SK-N-SH (cell line): ENCODE measurements at regions of chr10 and their contacts with region 1.

Region 1: GRCh38 chr10:100433253-100434240 is 29.3 kb upstream of the WNT8B start:
- DNase-seq: peak; percentile 77
- H3K4me3 ChIP-seq: no peak overlapping the region; a peak in 1 of 4 replicates
- H3K27ac ChIP-seq: no peak overlapping the region
- H3K4me1 ChIP-seq: no peaks in the 10 kb centered on the region
- H3K27me3 ChIP-seq: no peaks in the 10 kb centered on the region
- CTCF ChIP-seq: peak; percentile 100
- EP300 ChIP-seq: no peak
- RAD21 ChIP-seq: peak; percentile 100

Region 2: DNA sequence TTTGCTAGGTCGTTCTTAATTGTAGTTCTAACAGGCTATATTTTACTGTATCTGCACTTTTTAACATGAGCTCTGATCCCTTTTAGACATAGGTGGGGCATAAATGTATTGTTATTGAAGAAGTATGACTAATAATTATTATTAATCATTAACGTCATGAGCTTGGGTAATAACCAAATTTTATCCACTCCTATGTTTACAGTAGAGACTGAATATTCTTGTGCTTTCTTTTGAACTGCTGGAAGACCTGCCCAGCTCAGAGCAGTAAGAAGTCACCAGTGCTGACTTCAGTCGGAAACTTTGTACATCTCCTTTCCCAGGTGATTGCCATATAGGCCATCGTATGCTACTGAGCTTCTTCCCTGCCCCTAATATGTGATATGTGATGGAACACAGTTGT is 122.2 kb before region 1 on chr10:
- CTCF ChIA-PET with region 1: interaction called, 15 read pairs
- POLR2A ChIA-PET with region 1: no interaction called
- DNase-seq: no peak
- H3K4me3 ChIP-seq: no peak overlapping the region
- H3K27ac ChIP-seq: no peak overlapping the region
- H3K4me1 ChIP-seq: no peaks in the 10 kb centered on the region
- H3K27me3 ChIP-seq: peaks cover 38% of the 10 kb centered on the region; the same call in 1 of the 2 replicates
- CTCF ChIP-seq: no peak
- EP300 ChIP-seq: no peak
- RAD21 ChIP-seq: no peak

Region 3: DNA sequence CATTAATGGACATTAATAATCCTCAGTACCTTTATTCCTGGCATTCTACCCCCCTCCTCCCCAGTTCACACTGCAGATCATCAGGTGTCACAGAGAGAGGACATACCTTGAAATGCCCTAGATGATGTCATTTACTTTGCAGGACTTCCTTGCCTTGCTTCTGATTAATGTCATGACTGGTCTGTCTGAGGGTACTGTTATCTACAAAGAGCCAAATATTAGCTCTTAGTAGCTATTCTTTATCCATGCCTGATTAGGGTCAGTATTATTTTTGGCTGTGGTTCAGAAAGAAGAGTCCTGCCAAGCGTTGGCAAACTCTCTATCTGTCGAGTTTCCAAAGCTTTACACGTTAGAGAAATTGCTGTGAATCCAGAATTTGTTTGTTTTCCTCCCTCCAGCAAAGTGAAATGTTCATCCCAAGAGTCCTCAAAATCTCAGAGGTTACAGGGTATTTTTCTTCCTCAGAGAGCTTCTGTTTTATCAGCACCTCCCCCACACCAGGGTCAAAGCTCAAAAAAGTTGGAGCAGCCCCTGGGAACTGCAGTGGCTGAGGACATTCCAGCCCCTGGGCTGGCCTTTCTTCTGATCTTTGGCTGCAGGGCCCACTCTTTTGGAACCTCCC is 73.9 kb before region 1 on chr10:
- CTCF ChIA-PET with region 1: interaction called, 14 read pairs
- POLR2A ChIA-PET with region 1: no interaction called
- DNase-seq: peak; percentile 57
- H3K4me3 ChIP-seq: no peak overlapping the region; a peak in 1 of 4 replicates
- H3K27ac ChIP-seq: peak overlapping the region in 1 of 2 experiments; percentile 76; a peak in 2 of 4 replicates
- H3K4me1 ChIP-seq: peaks cover 15 to 56% of the 10 kb centered on the region in 2 experiments
- H3K27me3 ChIP-seq: no peaks in the 10 kb centered on the region
- CTCF ChIP-seq: no peak
- EP300 ChIP-seq: peak in 1 of 2 experiments; percentile 60; a peak in 2 of 4 replicates
- RAD21 ChIP-seq: peak; percentile 1; the same call in 1 of the 2 replicates

Region 4: GRCh38 chr10:100373298-100374136 is 60.0 kb before region 1 on chr10:
- CTCF ChIA-PET with region 1: interaction called, 14 read pairs
- POLR2A ChIA-PET with region 1: interaction called, 5 read pairs
- DNase-seq: peak; percentile 92
- H3K4me3 ChIP-seq: peak overlapping the region; percentile 56 to 69
- H3K27ac ChIP-seq: peak overlapping the region; percentile 97 to 99
- H3K4me1 ChIP-seq: peaks cover 20 to 27% of the 10 kb centered on the region in 2 experiments
- H3K27me3 ChIP-seq: no peaks in the 10 kb centered on the region
- CTCF ChIP-seq: no peak
- EP300 ChIP-seq: peak; percentile 7 to 12; a peak in 1 of 4 replicates
- RAD21 ChIP-seq: peak; percentile 3

Region 5: GRCh38 chr10:100481462-100482081 is 48.0 kb after region 1 on chr10:
- CTCF ChIA-PET with region 1: interaction called, 39 read pairs
- POLR2A ChIA-PET with region 1: no interaction called
- DNase-seq: peak; percentile 88
- H3K4me3 ChIP-seq: peak overlapping the region; percentile 54 to 65
- H3K27ac ChIP-seq: no peak overlapping the region
- H3K4me1 ChIP-seq: peaks cover 0 to 13% of the 10 kb centered on the region in 2 experiments; a peak in 1 of 4 replicates
- H3K27me3 ChIP-seq: peaks cover 25% of the 10 kb centered on the region; the same call in 1 of the 2 replicates
- CTCF ChIP-seq: peak; percentile 18
- EP300 ChIP-seq: no peak
- RAD21 ChIP-seq: peak; percentile 14; the same call in 1 of the 2 replicates

Region 6: DNA sequence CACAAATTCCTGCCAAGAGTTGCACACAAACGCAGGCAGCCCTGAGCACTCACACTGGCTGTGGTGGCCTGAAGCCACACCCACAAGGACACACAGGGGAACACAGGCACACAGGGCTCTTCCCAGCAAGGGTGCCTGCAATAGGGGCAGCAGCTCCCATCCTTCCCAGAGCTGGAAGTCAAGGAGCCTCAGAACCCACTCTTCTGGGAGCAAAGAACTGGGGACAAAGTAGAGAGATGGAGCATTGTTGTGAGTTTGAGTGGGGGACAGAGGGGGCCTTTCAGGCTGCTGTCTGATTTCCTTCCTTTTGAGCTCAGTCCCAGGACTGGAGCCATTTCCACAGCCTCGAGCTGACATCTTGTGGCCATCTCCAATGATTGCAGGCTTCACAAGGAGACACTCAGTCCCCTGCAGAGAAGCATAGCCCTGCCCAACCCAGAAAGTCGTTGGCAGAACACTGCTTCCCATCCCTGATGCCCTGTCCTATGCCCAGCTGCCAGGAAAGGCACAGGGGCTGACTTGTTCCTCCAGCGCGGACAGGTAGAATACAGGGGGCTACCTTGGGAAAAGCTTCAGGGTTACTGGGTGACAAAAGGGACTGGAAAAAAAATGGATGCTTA is 444.9 kb after region 1 on chr10:
- CTCF ChIA-PET with region 1: interaction called, 18 read pairs
- POLR2A ChIA-PET with region 1: no interaction called
- DNase-seq: peak; percentile 80
- H3K4me3 ChIP-seq: no peak overlapping the region
- H3K27ac ChIP-seq: no peak overlapping the region
- H3K4me1 ChIP-seq: peaks cover 0 to 30% of the 10 kb centered on the region in 2 experiments; a peak in 2 of 4 replicates
- H3K27me3 ChIP-seq: no peaks in the 10 kb centered on the region
- CTCF ChIP-seq: peak; percentile 79
- EP300 ChIP-seq: no peak
- RAD21 ChIP-seq: peak; percentile 96